ENCODE measurements at regions of chr18 and their contacts with region 1.

Region 1: GRCh38 chr18:9178557-9178956 is 42.0 kb downstream of the ANKRD12 start:
- DNase-seq: no peak
- ATAC-seq: no peak
- H3K4me3 ChIP-seq: no peak overlapping the region
- H3K4me3 Mint-ChIP-seq: no peak overlapping the region
- H3K27ac ChIP-seq: no peak overlapping the region
- H3K27ac Mint-ChIP-seq: peak overlapping the region in 6 of 9 donors; percentile 9 to 86 (median 20)
- H3K4me1 ChIP-seq: peaks cover 17 to 23% of the 10 kb centered on the region in 2 donors
- H3K4me1 Mint-ChIP-seq: peaks cover 24 to 91% (median 84%) of the 10 kb centered on the region in 7 donors
- H3K27me3 ChIP-seq: no peaks in the 10 kb centered on the region
- H3K27me3 Mint-ChIP-seq: no peaks in the 10 kb centered on the region

Region 2: GRCh38 chr18:9109523-9109922 is 69.0 kb before region 1 on chr18:
- CTCF ChIA-PET with region 1: no interaction called
- POLR2A ChIA-PET with region 1: no interaction called
- intact Hi-C with region 1: loop called in 1 of 2 experiments (anchors 2 kb)
- DNase-seq: no peak
- ATAC-seq: no peak
- H3K4me3 ChIP-seq: no peak overlapping the region
- H3K4me3 Mint-ChIP-seq: peak overlapping the region in 9 of 10 donors; percentile 48 to 97 (median 79)
- H3K27ac ChIP-seq: peak overlapping the region; percentile 29
- H3K27ac Mint-ChIP-seq: peak overlapping the region; percentile 53 to 96 (median 77)
- H3K4me1 ChIP-seq: peaks cover 56 to 76% of the 10 kb centered on the region in 2 donors
- H3K4me1 Mint-ChIP-seq: peaks cover 62 to 100% (median 94%) of the 10 kb centered on the region in 7 donors
- H3K27me3 ChIP-seq: no peaks in the 10 kb centered on the region
- H3K27me3 Mint-ChIP-seq: no peaks in the 10 kb centered on the region

Region 3: GRCh38 chr18:9160014-9160413 is 18.5 kb before region 1 on chr18:
- CTCF ChIA-PET with region 1: no interaction called
- POLR2A ChIA-PET with region 1: no interaction called
- intact Hi-C with region 1: loop called in 1 of 2 experiments (anchors 2 kb)
- DNase-seq: no peak
- ATAC-seq: peak; percentile 47
- H3K4me3 ChIP-seq: no peak overlapping the region
- H3K4me3 Mint-ChIP-seq: peak overlapping the region in 2 of 10 donors; percentile 18 to 49
- H3K27ac ChIP-seq: no peak overlapping the region
- H3K27ac Mint-ChIP-seq: no peak overlapping the region
- H3K4me1 ChIP-seq: peaks cover 15 to 33% of the 10 kb centered on the region in 2 donors
- H3K4me1 Mint-ChIP-seq: peaks cover 35 to 83% (median 67%) of the 10 kb centered on the region in 7 donors
- H3K27me3 ChIP-seq: no peaks in the 10 kb centered on the region
- H3K27me3 Mint-ChIP-seq: no peaks in the 10 kb centered on the region